ENCODE measurements at regions of chr2 and their contacts with region 1.

Region 1: DNA sequence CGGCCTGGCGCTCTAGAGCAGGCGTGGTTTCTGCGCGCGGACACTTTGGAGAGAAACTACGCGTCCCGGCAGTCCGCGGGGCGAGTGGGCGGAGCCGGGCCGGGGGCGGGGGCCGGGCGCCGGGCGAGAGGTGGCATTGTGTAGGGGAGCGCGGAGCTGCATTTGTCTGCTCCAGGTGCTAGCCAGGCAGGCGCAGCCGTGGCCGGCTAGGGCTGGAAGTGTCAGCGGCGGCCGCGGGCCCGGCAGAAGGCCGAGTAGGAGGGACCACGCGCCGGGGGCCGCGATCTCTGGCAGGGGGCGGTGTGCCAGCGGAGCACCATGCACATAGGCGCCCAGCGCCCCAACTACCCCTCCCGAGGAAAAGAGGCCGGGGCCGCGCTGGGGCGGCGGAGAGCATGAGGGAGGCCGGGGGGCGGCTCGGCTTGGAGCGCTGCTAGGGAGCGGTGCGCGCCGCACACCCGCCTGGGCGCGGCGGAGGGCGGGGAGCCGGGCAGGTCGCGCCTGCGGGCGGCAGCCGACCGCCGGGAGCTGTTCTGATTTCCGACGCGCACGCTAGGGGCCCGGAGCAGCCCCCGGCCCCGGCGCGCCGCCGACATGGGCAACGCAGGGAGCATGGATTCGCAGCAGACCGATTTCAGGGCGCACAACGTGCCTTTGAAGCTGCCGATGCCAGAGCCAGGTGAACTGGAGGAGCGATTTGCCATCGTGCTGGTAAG is at the start of gene FMNL2:
- DNase-seq: peak; percentile 83
- H3K4me3 ChIP-seq: peak within 1 kb of the TSS; percentile 81 to 93 (median 81)
- H3K27ac ChIP-seq: peak within 1 kb of the TSS; percentile 59
- H3K4me1 ChIP-seq: peaks cover 16% of the 10 kb centered on the region
- H3K27me3 ChIP-seq: no peaks in the 10 kb centered on the region
- CTCF ChIP-seq: peak in 1 of 2 donors; percentile 8
- total RNA-seq, gene FMNL2: 26.5 to 62.9 TPM

Region 2: GRCh38 chr2:152189622-152190495 is 145.3 kb before region 1 on chr2:
- CTCF ChIA-PET with region 1: no interaction called
- dilution Hi-C with region 1: no loop called
- in situ Hi-C with region 1: loop called (anchors 10 kb)
- intact Hi-C with region 1: loop called (anchors 1 kb)
- DNase-seq: peak; percentile 57
- H3K4me3 ChIP-seq: no peak overlapping the region
- H3K27ac ChIP-seq: no peak overlapping the region
- H3K4me1 ChIP-seq: no peaks in the 10 kb centered on the region
- H3K27me3 ChIP-seq: no peaks in the 10 kb centered on the region
- CTCF ChIP-seq: peak; percentile 86 to 88

Region 3: DNA sequence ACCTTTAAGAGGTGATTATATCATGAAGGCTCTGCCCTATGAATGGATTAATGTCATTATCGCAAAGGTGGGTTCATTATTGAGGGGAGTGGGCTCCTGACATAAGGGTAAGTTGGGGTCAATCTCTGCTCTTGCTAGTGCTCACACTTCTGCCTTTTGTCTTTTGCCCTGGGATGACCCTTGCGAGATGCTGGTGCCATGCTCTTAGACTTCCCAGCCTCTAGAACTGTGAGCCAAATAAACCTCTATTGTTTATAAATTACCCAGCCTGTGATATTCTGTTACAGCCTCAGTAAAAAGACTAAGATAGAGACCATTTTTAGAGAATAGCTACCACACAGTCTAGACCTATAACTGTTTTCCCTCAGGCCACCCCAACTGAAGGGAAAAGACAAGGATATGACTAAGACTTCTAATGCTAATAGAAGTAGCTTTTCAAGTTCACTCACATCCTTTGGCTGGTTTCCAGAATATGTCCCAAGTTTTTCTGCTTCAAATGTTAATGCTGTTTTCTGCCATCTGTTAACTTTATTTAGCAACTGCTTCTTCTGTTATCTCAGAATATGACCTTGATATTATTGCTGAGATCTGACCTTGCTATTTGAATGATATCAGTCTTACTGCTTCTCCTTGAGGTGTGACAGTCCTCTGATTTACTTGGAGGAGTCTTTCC is 94.5 kb before region 1 on chr2:
- CTCF ChIA-PET with region 1: no interaction called
- dilution Hi-C with region 1: no loop called
- in situ Hi-C with region 1: no loop called
- intact Hi-C with region 1: loop called (anchors 5 kb)
- DNase-seq: peak; percentile 90
- H3K4me3 ChIP-seq: no peak overlapping the region
- H3K27ac ChIP-seq: peak overlapping the region; percentile 54
- H3K4me1 ChIP-seq: peaks cover 35% of the 10 kb centered on the region
- H3K27me3 ChIP-seq: no peaks in the 10 kb centered on the region
- CTCF ChIP-seq: no peak

Region 4: DNA sequence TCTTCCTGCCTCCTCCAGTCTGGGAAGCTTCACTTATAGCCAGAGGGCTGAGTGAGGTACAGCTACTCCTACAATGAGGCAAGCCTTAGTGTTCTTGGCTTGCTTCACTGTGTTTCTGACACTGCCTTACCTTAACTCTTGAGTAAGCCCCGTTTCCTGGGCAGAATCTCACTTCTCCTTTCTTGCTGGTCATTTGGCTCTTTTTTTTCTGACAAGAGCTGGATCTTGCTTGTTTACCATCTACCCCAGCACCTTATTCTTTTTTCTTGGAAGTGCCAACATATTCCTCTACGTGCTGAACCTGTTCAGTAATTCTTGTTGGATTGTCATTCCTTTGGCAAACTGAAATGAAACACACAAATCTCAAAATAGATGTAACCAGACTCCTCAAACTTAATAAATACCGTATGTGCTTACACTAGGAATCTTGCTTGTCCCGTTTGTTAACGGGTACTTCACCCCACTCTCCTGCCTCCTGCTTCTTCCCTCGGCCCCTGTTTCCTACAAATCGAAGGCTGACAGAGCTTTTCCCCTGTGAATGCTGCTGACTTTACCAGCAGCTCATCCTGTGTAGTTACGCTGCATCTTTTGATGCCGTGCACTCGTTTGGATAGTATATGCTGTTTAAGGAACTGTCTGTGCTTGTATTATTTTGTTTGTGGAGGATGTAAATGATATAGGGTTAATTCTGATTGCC is 132.0 kb after region 1 on chr2:
- CTCF ChIA-PET with region 1: no interaction called
- dilution Hi-C with region 1: no loop called
- in situ Hi-C with region 1: no loop called
- intact Hi-C with region 1: loop called (anchors 5 kb)
- DNase-seq: peak; percentile 79
- H3K4me3 ChIP-seq: peak overlapping the region in 1 of 3 experiments; percentile 2
- H3K27ac ChIP-seq: peak overlapping the region; percentile 42
- H3K4me1 ChIP-seq: peaks cover 29% of the 10 kb centered on the region
- H3K27me3 ChIP-seq: no peaks in the 10 kb centered on the region
- CTCF ChIP-seq: no peak

Region 5: GRCh38 chr2:152627351-152627957 is 292.3 kb after region 1 on chr2:
- CTCF ChIA-PET with region 1: no interaction called
- dilution Hi-C with region 1: no loop called
- in situ Hi-C with region 1: no loop called
- intact Hi-C with region 1: loop called (anchors 1 kb)
- DNase-seq: peak; percentile 12
- H3K4me3 ChIP-seq: no peak overlapping the region
- H3K27ac ChIP-seq: no peak overlapping the region
- H3K4me1 ChIP-seq: no peaks in the 10 kb centered on the region
- H3K27me3 ChIP-seq: no peaks in the 10 kb centered on the region
- CTCF ChIP-seq: peak; percentile 44 to 53

Measured in mammary epithelial cell (primary cell).